Transverse colon (tissue), 4 donors: ENCODE measurements at regions of chr6 and their contacts with region 1.

Region 1: GRCh38 chr6:155327326-155328073 is 13.2 kb upstream of the TFB1M start:
- DNase-seq: peak; percentile 60
- H3K4me3 ChIP-seq: no peak overlapping the region
- H3K27ac ChIP-seq: no peak overlapping the region
- H3K4me1 ChIP-seq: peaks cover 0 to 3% (median 0%) of the 10 kb centered on the region in 4 donors
- H3K27me3 ChIP-seq: no peaks in the 10 kb centered on the region
- CTCF ChIP-seq: peak; percentile 76 to 88 (median 81)
- EP300 ChIP-seq: no peak
- POLR2A ChIP-seq: no peak

Region 2: GRCh38 chr6:155530219-155530834 is 202.8 kb after region 1 on chr6:
- in situ Hi-C with region 1: loop called (anchors 10 to 25 kb)
- intact Hi-C with region 1: no loop called
- DNase-seq: no peak
- H3K4me3 ChIP-seq: no peak overlapping the region
- H3K27ac ChIP-seq: no peak overlapping the region
- H3K4me1 ChIP-seq: peaks cover 0 to 8% (median 0%) of the 10 kb centered on the region in 4 donors
- H3K27me3 ChIP-seq: no peaks in the 10 kb centered on the region
- CTCF ChIP-seq: peak; percentile 39 to 52 (median 44)
- EP300 ChIP-seq: no peak
- POLR2A ChIP-seq: no peak

Region 3: GRCh38 chr6:156102129-156102528 is 774.6 kb after region 1 on chr6:
- in situ Hi-C with region 1: loop called in 1 of 4 experiments (anchors 25 kb)
- intact Hi-C with region 1: no loop called
- DNase-seq: peak; percentile 10
- H3K4me3 ChIP-seq: no peak overlapping the region
- H3K27ac ChIP-seq: no peak overlapping the region
- H3K4me1 ChIP-seq: no peaks in the 10 kb centered on the region
- H3K27me3 ChIP-seq: no peaks in the 10 kb centered on the region
- CTCF ChIP-seq: peak in 2 of 5 experiments; percentile 8 to 19
- EP300 ChIP-seq: no peak
- POLR2A ChIP-seq: no peak